ENCODE measurements at regions of chr19 and their contacts with region 1.

Region 1: DNA sequence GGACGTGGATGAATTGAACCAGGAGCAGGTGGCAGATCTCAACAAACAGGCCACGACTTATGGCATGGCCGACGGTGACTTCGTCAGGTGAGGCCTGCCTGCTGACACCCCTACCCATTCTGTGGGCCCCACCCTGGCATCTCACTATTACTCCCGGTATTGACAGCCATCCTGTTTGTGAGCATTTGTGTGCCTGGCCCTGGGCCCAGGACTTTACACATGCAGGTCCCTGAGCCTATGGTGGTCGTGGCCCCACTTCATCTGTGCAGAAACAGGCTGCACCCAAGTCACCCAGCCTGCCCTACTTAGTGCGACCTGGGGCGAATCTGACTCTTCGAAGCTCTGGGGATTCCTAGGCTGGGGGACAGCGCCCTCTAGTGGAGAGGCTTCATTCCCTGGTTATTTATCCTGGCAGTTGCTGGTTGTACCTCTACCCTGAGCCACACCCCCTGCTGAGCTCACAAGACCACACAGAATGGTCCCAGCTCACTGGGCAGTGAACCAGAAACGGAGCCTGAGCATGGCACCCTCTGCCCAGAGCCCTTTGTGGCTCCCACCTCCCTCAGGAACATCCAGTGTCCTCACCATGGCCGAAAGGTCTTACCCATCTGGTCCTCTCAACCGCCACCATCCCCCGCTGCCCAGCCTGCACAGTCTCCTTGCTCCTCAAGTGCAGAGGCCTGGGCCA is 16.9 kb downstream of the ZNF296 start:
- DNase-seq: no peak
- ATAC-seq: peak; percentile 97
- H3K4me3 ChIP-seq: no peak overlapping the region
- H3K27ac ChIP-seq: no peak overlapping the region
- H3K4me1 ChIP-seq: no peaks in the 10 kb centered on the region
- H3K27me3 ChIP-seq: no peaks in the 10 kb centered on the region
- CTCF ChIP-seq: peak; percentile 90 to 97 (median 90)
- EP300 ChIP-seq: no peak
- POLR2A ChIP-seq: no peak
- RAD21 ChIP-seq: peak; percentile 93

Region 2: GRCh38 chr19:44903602-44904425 is 155.6 kb before region 1 on chr19:
- CTCF ChIA-PET with region 1: interaction called, 5 read pairs
- POLR2A ChIA-PET with region 1: no interaction called
- RAD21 ChIA-PET with region 1: interaction called, 8 read pairs
- SMC1A ChIA-PET with region 1: no interaction called
- in situ Hi-C with region 1: loop called (anchors 5 kb)
- intact Hi-C with region 1: loop called (anchors 2 kb)
- DNase-seq: no peak
- ATAC-seq: peak; percentile 84
- H3K4me3 ChIP-seq: no peak overlapping the region
- H3K27ac ChIP-seq: no peak overlapping the region
- H3K4me1 ChIP-seq: no peaks in the 10 kb centered on the region
- H3K27me3 ChIP-seq: no peaks in the 10 kb centered on the region
- CTCF ChIP-seq: peak; percentile 93 to 99 (median 96)
- EP300 ChIP-seq: no peak
- POLR2A ChIP-seq: peak; percentile 25; the same call in 1 of the 2 replicates
- RAD21 ChIP-seq: peak; percentile 88

Region 3: DNA sequence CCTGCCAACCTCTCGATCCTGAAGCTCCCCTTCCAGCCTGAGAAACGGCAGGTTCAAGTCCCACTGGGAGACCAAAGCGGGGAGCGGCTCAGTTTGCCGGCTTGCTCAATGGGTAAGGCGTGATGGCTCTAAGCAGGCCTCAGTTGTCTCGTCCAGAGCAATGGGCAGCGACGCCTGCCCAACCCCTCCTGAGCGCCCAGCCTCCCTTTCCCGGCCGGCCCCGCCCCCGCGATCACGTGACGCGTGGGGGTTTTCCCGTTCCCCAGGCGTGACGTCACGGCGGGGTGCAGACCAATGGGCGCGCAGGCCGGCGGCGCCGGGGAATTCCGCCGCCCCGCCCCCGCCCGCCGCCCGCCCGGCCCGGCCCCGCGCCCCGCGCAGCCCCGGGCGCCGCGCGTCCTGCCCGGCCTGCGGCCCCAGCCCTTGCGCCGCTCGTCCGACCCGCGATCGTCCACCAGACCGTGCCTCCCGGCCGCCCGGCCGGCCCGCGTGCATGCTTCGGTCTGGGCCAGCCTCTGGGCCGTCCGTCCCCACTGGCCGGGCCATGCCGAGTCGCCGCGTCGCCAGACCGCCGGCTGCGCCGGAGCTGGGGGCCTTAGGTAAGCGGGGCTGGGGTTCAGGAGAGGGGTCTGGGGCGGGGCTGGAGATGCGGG is 58.2 kb before region 1 on chr19 and contains the start of gene RELB:
- CTCF ChIA-PET with region 1: interaction called, 10 read pairs
- POLR2A ChIA-PET with region 1: interaction called, 3 read pairs
- RAD21 ChIA-PET with region 1: interaction called, 5 read pairs
- SMC1A ChIA-PET with region 1: no interaction called
- in situ Hi-C with region 1: no loop called
- intact Hi-C with region 1: no loop called
- DNase-seq: peak; percentile 57
- ATAC-seq: peak; percentile 74
- H3K4me3 ChIP-seq: peak within 1 kb of the TSS; percentile 91
- H3K27ac ChIP-seq: peak within 1 kb of the TSS; percentile 92
- H3K4me1 ChIP-seq: peaks cover 3% of the 10 kb centered on the region; the same call in 1 of the 2 replicates
- H3K27me3 ChIP-seq: no peaks in the 10 kb centered on the region
- CTCF ChIP-seq: no peak
- EP300 ChIP-seq: 0 out of 4 replicates have a peak, but pooled peaks have one; percentile 22 to 25
- POLR2A ChIP-seq: peak; percentile 89
- RAD21 ChIP-seq: no peak
- polyA plus RNA-seq, gene RELB: 0.66 to 3.2 TPM

Region 4: GRCh38 chr19:45038931-45039893 is 20.2 kb before region 1 on chr19 and contains the start of gene CLASRP:
- CTCF ChIA-PET with region 1: interaction called, 12 read pairs
- POLR2A ChIA-PET with region 1: interaction called, 3 read pairs
- RAD21 ChIA-PET with region 1: interaction called, 21 read pairs
- SMC1A ChIA-PET with region 1: interaction called, 7 read pairs
- in situ Hi-C with region 1: no loop called
- intact Hi-C with region 1: no loop called
- DNase-seq: peak; percentile 44
- ATAC-seq: peak; percentile 97
- H3K4me3 ChIP-seq: peak within 1 kb of the TSS; percentile 76
- H3K27ac ChIP-seq: peak within 1 kb of the TSS; percentile 94
- H3K4me1 ChIP-seq: peaks cover 10% of the 10 kb centered on the region
- H3K27me3 ChIP-seq: no peaks in the 10 kb centered on the region
- CTCF ChIP-seq: no peak
- EP300 ChIP-seq: no peak
- POLR2A ChIP-seq: peak; percentile 99
- RAD21 ChIP-seq: no peak
- polyA plus RNA-seq, gene CLASRP: 0.68 to 2.3 TPM

Region 5: DNA sequence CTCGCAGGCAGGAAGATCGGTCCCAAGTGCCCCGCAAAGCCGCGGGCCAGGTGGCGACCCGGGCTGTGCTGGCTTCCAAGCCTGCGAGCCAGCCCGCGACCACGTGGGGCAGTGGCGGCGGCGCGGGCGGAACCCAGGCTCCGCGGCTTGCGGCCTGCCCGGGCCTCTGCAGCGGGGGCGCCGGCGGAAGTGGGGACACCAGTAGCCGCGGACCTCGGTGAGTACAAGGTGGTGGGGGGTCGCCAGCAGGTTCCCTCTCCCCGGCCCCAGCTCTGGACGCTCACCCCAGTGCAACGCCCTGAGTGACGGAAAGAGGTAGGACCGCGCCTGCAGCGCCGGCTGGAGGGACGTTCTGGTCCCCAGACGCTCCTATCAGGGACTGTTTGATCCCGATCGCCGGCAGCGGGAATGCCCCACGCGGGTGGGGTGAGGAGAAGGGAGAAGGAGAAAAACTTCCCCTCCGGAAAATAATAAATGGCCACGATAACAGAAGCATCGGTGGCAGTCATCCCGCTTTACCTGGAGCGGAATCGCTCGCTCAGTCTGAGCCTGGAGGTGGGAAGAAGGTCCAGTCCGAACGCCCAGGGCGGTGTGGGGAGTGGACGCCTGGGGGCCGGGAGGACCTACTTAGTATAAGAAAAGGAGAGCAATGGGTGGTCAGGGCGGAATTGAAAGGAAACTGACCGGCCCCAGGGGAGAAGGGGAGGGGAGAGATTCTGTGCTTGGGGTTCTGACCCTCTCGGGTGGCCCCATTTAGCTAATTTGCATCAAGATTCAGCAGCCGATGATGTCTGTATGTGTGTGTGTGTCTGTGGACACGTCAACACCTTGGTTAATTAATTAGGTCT is 19.9 kb after region 1 on chr19 and contains the start of gene GEMIN7:
- CTCF ChIA-PET with region 1: interaction called, 14 read pairs
- POLR2A ChIA-PET with region 1: interaction called, 5 read pairs
- RAD21 ChIA-PET with region 1: interaction called, 7 read pairs
- SMC1A ChIA-PET with region 1: interaction called, 5 read pairs
- in situ Hi-C with region 1: no loop called
- intact Hi-C with region 1: no loop called
- DNase-seq: peak; percentile 64
- ATAC-seq: peak; percentile 56
- H3K4me3 ChIP-seq: peak within 1 kb of the TSS; percentile 89
- H3K27ac ChIP-seq: peak within 1 kb of the TSS; percentile 95
- H3K4me1 ChIP-seq: peaks cover 22% of the 10 kb centered on the region
- H3K27me3 ChIP-seq: no peaks in the 10 kb centered on the region
- CTCF ChIP-seq: peak in 2 of 3 experiments; percentile 9 to 11; a peak in 1 of 6 replicates
- EP300 ChIP-seq: peak; percentile 65 to 80; a peak in 2 of 4 replicates
- POLR2A ChIP-seq: peak; percentile 83
- RAD21 ChIP-seq: no peak
- polyA plus RNA-seq, gene GEMIN7: 51.6 to 55.3 TPM

Region 6: GRCh38 chr19:45171211-45171623 is 111.8 kb after region 1 on chr19:
- CTCF ChIA-PET with region 1: no interaction called
- POLR2A ChIA-PET with region 1: no interaction called
- RAD21 ChIA-PET with region 1: no interaction called
- SMC1A ChIA-PET with region 1: no interaction called
- in situ Hi-C with region 1: no loop called
- intact Hi-C with region 1: no loop called
- DNase-seq: no peak
- ATAC-seq: peak; percentile 36; the same call in 1 of the 3 replicates
- H3K4me3 ChIP-seq: no peak overlapping the region
- H3K27ac ChIP-seq: no peak overlapping the region
- H3K4me1 ChIP-seq: peaks cover 13% of the 10 kb centered on the region
- H3K27me3 ChIP-seq: no peaks in the 10 kb centered on the region
- CTCF ChIP-seq: no peak
- EP300 ChIP-seq: no peak
- POLR2A ChIP-seq: no peak
- RAD21 ChIP-seq: no peak